ENCODE measurements at regions of chr6 and their contacts with region 1.

Region 1: DNA sequence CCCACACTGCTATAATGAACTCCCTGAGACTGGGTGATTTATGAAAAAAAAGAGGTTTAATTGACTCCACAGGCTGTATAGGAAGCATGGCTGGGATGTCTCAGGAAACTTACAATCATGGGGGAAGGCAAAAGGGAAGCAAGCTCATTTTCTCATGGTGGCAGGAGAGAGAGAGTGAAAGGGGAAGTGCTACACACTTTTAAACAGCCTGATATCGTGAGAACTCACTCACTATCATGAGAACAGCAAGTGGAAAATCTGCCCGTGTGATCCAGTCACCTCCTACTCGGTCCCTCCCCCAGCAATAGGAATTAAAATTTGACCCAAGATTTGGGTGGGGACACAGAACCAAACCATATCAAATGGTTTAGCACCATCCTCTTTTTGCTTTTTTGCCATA is 116.6 kb upstream of the CEP162 start:
- DNase-seq: no peak
- H3K4me3 ChIP-seq: no peak overlapping the region
- H3K27ac ChIP-seq: no peak overlapping the region
- H3K4me1 ChIP-seq: no peaks in the 10 kb centered on the region
- H3K27me3 ChIP-seq: peaks cover 2% of the 10 kb centered on the region
- CTCF ChIP-seq: no peak

Region 2: GRCh38 chr6:84329077-84329476 is 14.9 kb before region 1 on chr6:
- CTCF ChIA-PET with region 1: no interaction called
- dilution Hi-C with region 1: no loop called
- in situ Hi-C with region 1: no loop called
- intact Hi-C with region 1: no loop called
- DNase-seq: no peak
- H3K4me3 ChIP-seq: no peak overlapping the region
- H3K27ac ChIP-seq: no peak overlapping the region
- H3K4me1 ChIP-seq: no peaks in the 10 kb centered on the region
- H3K27me3 ChIP-seq: no peaks in the 10 kb centered on the region
- CTCF ChIP-seq: no peak

Region 3: GRCh38 chr6:84392261-84392660 is 48.3 kb after region 1 on chr6:
- CTCF ChIA-PET with region 1: no interaction called
- dilution Hi-C with region 1: loop called (anchors 5 kb)
- in situ Hi-C with region 1: no loop called
- intact Hi-C with region 1: no loop called
- DNase-seq: no peak
- H3K4me3 ChIP-seq: no peak overlapping the region
- H3K27ac ChIP-seq: no peak overlapping the region
- H3K4me1 ChIP-seq: no peaks in the 10 kb centered on the region
- H3K27me3 ChIP-seq: no peaks in the 10 kb centered on the region
- CTCF ChIP-seq: no peak

Measured in mammary epithelial cell (primary cell).